Vagina (tissue), 2 donors: ENCODE measurements at regions of chr1 and their contacts with region 1.

Region 1: GRCh38 chr1:40951943-40952743 is 27.4 kb upstream of the CTPS1 start:
- DNase-seq: no peak
- H3K4me3 ChIP-seq: no peak overlapping the region
- H3K27ac ChIP-seq: no peak overlapping the region
- H3K4me1 ChIP-seq: no peaks in the 10 kb centered on the region
- H3K27me3 ChIP-seq: no peaks in the 10 kb centered on the region
- CTCF ChIP-seq: peak; percentile 67 to 86 (median 85)
- POLR2A ChIP-seq: no peak

Region 2: GRCh38 chr1:40849801-40850592 is 102.1 kb before region 1 on chr1:
- intact Hi-C with region 1: loop called (anchors 10 kb)
- DNase-seq: no peak
- H3K4me3 ChIP-seq: no peak overlapping the region
- H3K27ac ChIP-seq: no peak overlapping the region
- H3K4me1 ChIP-seq: no peaks in the 10 kb centered on the region
- H3K27me3 ChIP-seq: no peaks in the 10 kb centered on the region
- CTCF ChIP-seq: peak; percentile 67 to 88 (median 78)
- POLR2A ChIP-seq: no peak

Region 3: DNA sequence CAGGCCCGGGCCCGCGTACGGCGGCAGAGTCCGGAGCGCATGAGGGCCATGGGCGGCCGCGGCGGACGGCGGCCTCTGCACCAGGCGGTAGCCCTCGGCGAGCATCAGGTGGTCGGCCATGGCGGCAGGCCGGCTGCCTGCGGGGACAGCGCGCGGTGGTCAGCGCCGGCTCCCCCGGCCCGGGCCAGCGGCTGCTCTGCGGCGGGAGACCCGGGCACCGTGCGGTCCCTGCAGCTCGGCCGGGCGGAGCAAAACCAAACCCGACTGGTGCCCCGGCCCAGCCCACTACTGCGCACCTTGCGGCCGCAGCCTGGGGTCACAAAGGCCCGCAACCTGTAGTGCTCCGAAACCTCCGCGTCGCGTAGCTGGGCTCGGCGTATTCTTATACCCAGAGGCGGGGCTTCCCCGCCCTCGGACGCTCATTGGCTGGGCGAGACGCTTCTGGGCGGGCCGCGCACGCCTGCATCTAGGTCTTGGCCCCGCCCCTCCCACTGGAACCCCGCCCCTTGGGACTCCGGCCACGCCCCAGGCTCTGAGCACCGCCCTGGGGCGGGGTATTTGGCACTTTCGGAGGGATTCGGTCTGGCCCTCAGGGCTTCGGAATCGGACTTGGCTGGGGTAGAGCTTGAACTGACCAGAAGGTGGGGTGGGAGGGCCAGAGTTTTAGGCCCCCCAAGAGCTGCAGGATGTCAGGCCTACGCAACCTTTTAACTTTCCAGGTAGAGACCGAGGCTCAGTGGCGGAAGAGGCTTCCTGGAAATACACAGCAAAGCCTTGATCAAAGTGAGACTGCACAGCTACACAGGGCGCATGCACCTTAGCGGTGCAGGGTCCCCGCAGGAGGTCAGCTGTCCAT is 89.9 kb before region 1 on chr1 and contains the start of gene CITED4:
- intact Hi-C with region 1: loop called (anchors 5 kb)
- DNase-seq: peak in 1 of 2 donors; percentile 96
- H3K4me3 ChIP-seq: peak within 1 kb of the TSS; percentile 71 to 97
- H3K27ac ChIP-seq: peak within 1 kb of the TSS; percentile 78
- H3K4me1 ChIP-seq: peaks cover 22% of the 10 kb centered on the region
- H3K27me3 ChIP-seq: no peaks in the 10 kb centered on the region
- CTCF ChIP-seq: no peak
- POLR2A ChIP-seq: peak; percentile 85 to 86
- total RNA-seq, gene CITED4: 16.5 TPM